Activated T-helper 1 cell treated with anti-CD3 and anti-CD28 coated beads, Interleukin-12 subunit alpha, Interleukin-12 subunit beta, Interleukin-2, Interleukin-4 antibody, amounts not matched to agents 30 ng/mL and 10 ng/mL and 1 ng/mL, durations not matched to agents 14 hours and 24 hours and 36 hours (primary cell): ENCODE measurements at regions of chr3 and their contacts with region 1.

Region 1: DNA sequence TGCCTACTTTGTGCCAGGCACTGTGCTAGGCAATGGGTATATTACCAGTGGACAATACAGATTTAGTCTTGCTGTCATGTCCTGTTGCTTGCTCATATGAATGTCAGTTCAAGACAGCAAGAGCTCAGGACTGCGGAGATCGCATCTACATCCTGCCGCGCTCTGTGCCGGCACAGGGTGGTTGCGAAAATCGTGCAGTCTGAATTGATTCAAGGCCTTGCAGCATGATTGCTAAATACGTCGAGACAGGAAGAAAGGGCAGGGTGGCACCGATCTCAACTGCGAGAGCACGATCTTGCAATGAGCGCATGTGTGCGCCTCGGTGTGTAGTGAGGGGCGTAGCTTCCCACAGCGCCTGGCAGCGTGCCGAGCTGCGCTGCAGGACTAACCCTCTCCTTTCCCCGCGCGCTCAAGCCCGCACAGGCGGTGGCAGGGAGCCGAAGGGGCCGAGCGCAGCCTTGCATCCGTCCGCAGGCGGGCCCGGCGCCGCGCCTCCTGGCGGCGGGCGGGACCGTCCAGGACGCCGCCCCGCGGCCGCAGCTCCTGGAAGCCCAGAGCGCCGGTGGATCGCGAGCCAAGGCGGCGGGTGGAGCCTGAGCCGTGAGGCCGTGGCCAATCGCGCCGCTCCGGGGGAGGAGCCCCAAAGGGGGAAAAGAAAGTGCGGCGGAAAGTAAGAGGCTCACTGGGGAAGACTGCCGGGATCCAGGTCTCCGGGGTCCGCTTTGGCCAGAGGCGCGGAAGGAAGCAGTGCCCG is at the start of gene IL1RAP:
- DNase-seq: peak; percentile 88
- H3K4me3 Mint-ChIP-seq: peak within 1 kb of the TSS; percentile 89
- H3K27ac Mint-ChIP-seq: peak within 1 kb of the TSS; percentile 98
- H3K4me1 Mint-ChIP-seq: peaks cover 49% of the 10 kb centered on the region
- H3K27me3 Mint-ChIP-seq: peaks cover 3% of the 10 kb centered on the region
- total RNA-seq, gene IL1RAP: 26.4 and 31.6 TPM in 2 replicates

Region 2: DNA sequence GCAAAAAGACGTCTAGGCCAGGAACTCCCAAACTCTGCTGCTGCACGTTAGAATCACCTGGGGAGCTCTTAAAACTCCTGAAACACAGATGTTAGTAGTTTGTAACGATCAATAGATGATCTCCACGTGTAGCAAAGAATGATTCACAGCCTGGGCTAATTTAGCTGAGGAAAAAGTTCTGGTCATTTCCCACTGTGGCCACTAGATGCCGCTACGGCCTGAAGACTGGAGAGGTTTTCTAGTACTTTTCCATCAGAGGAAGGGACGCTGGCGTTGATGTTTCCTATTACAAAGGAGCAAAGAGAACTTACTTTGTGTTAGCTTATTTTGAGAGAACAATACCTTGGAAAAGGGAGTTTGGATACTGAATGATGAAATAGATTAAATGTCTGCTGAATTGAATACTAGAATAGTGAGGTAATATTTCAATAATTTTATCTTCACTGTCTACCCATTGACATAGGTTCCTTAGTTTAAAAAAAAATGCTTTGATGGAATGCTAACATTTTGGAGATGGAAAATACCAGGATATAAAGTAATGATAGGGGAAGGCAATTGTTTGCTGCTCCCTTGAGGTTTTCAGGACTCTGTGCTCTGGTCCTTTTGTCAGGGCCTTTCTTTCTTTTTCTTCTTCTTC is 551.9 kb before region 1 on chr3:
- intact Hi-C with region 1: loop called (anchors 10 kb)
- DNase-seq: peak; percentile 49
- H3K4me3 Mint-ChIP-seq: no peak overlapping the region
- H3K27ac Mint-ChIP-seq: no peak overlapping the region
- H3K4me1 Mint-ChIP-seq: peaks cover 7% of the 10 kb centered on the region
- H3K27me3 Mint-ChIP-seq: peaks cover 2% of the 10 kb centered on the region

Region 3: GRCh38 chr3:190491533-190492054 is 22.0 kb before region 1 on chr3:
- intact Hi-C with region 1: loop called (anchors 1 kb)
- DNase-seq: no peak
- H3K4me3 Mint-ChIP-seq: no peak overlapping the region
- H3K27ac Mint-ChIP-seq: peak overlapping the region; percentile 7
- H3K4me1 Mint-ChIP-seq: peaks cover 27% of the 10 kb centered on the region
- H3K27me3 Mint-ChIP-seq: peaks cover 67% of the 10 kb centered on the region

Region 4: GRCh38 chr3:190534986-190535385 is 21.4 kb after region 1 on chr3:
- intact Hi-C with region 1: loop called (anchors 1 kb)
- DNase-seq: no peak
- H3K4me3 Mint-ChIP-seq: no peak overlapping the region
- H3K27ac Mint-ChIP-seq: no peak overlapping the region
- H3K4me1 Mint-ChIP-seq: peaks cover 59% of the 10 kb centered on the region
- H3K27me3 Mint-ChIP-seq: no peaks in the 10 kb centered on the region

Region 5: GRCh38 chr3:190585805-190586630 is 72.4 kb after region 1 on chr3:
- intact Hi-C with region 1: loop called (anchors 1 kb)
- DNase-seq: peak; percentile 49
- H3K4me3 Mint-ChIP-seq: peak overlapping the region; percentile 72
- H3K27ac Mint-ChIP-seq: peak overlapping the region; percentile 97
- H3K4me1 Mint-ChIP-seq: peaks cover 46% of the 10 kb centered on the region
- H3K27me3 Mint-ChIP-seq: no peaks in the 10 kb centered on the region

Region 6: GRCh38 chr3:190617185-190617584 is 103.6 kb after region 1 on chr3:
- intact Hi-C with region 1: loop called (anchors 1 kb)
- DNase-seq: peak; percentile 58
- H3K4me3 Mint-ChIP-seq: peak overlapping the region; percentile 61
- H3K27ac Mint-ChIP-seq: peak overlapping the region; percentile 97
- H3K4me1 Mint-ChIP-seq: peaks cover 91% of the 10 kb centered on the region
- H3K27me3 Mint-ChIP-seq: no peaks in the 10 kb centered on the region

Region 7: GRCh38 chr3:190780524-190780923 is 266.9 kb after region 1 on chr3:
- intact Hi-C with region 1: no loop called
- DNase-seq: no peak
- H3K4me3 Mint-ChIP-seq: no peak overlapping the region
- H3K27ac Mint-ChIP-seq: no peak overlapping the region
- H3K4me1 Mint-ChIP-seq: no peaks in the 10 kb centered on the region
- H3K27me3 Mint-ChIP-seq: no peaks in the 10 kb centered on the region

Region 8: DNA sequence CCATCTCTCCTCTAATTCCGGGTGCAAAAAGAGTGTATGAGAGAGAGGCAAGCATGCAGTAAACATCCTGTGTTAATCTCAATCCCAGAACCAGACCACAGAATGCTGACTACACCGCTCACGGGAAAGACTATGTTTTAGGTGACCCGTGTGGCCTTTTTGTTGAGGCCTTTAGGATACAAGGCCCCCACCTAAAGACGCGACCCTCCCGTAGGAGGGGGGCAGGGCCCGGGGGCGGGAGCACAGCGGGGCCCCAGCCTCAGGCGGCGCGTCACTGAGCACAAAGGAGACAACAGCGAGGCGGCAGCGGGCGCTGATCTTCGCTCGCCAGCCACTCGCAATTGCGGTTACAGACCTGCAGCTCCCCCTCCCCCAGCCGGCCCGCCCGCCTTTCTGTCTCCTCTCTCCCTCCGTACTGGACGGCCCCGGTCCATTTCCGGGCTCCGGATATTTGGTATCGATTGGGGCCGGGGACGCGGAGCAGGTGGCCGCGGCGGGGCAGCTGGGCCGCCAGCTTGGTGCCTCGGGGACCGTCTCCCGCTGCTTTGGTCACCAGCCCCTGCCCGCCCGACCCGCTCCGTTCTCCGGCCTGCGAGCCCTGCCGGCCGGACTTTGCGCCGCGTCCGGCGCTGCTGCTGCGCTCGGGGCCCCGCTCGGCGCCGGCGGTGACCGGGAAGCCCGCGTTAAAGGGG is 815.5 kb after region 1 on chr3 and contains the start of gene CCDC50:
- intact Hi-C with region 1: loop called (anchors 10 kb)
- DNase-seq: peak; percentile 48
- H3K4me3 Mint-ChIP-seq: peak within 1 kb of the TSS; percentile 85
- H3K27ac Mint-ChIP-seq: peak within 1 kb of the TSS; percentile 92
- H3K4me1 Mint-ChIP-seq: peaks cover 32% of the 10 kb centered on the region
- H3K27me3 Mint-ChIP-seq: peaks cover 13% of the 10 kb centered on the region
- total RNA-seq, gene CCDC50: 36.1 and 37.2 TPM in 2 replicates